ENCODE measurements at regions of chr3 and their contacts with region 1.

Region 1: GRCh38 chr3:157532529-157533297 is 29.5 kb upstream of the VEPH1 start:
- DNase-seq: peak; percentile 87
- H3K4me3 ChIP-seq: no peak overlapping the region
- H3K27ac ChIP-seq: no peak overlapping the region
- H3K4me1 ChIP-seq: no peaks in the 10 kb centered on the region
- H3K27me3 ChIP-seq: peaks cover under 1% of the 10 kb centered on the region
- CTCF ChIP-seq: peak; percentile 83

Region 2: GRCh38 chr3:155676252-155676981 is 1856.3 kb before region 1 on chr3:
- CTCF ChIA-PET with region 1: no interaction called
- POLR2A ChIA-PET with region 1: no interaction called
- intact Hi-C with region 1: no loop called
- DNase-seq: no peak
- H3K4me3 ChIP-seq: no peak overlapping the region
- H3K27ac ChIP-seq: no peak overlapping the region
- H3K4me1 ChIP-seq: no peaks in the 10 kb centered on the region
- H3K27me3 ChIP-seq: no peaks in the 10 kb centered on the region
- CTCF ChIP-seq: no peak

Region 3: GRCh38 chr3:158532099-158532734 is 999.5 kb after region 1 on chr3:
- CTCF ChIA-PET with region 1: no interaction called
- POLR2A ChIA-PET with region 1: no interaction called
- intact Hi-C with region 1: loop called (anchors 5 kb)
- DNase-seq: peak; percentile 63
- H3K4me3 ChIP-seq: no peak overlapping the region
- H3K27ac ChIP-seq: no peak overlapping the region
- H3K4me1 ChIP-seq: peaks cover 4% of the 10 kb centered on the region
- H3K27me3 ChIP-seq: no peaks in the 10 kb centered on the region
- CTCF ChIP-seq: peak; percentile 77